H1 (cell line): ENCODE measurements at regions of chr20 and their contacts with region 1.

Region 1: GRCh38 chr20:33933469-33933909 is 60.2 kb upstream of the RALY start:
- DNase-seq: peak; percentile 51 to 70
- H3K4me3 ChIP-seq: no peak overlapping the region
- H3K27ac ChIP-seq: no peak overlapping the region
- H3K4me1 ChIP-seq: no peaks in the 10 kb centered on the region
- H3K27me3 ChIP-seq: no peaks in the 10 kb centered on the region
- CTCF ChIP-seq: peak; percentile 80 to 92 (median 82)
- EP300 ChIP-seq: no peak
- POLR2A ChIP-seq: no peak
- RAD21 ChIP-seq: peak; percentile 90 to 94

Region 2: GRCh38 chr20:33915726-33916331 is 17.7 kb before region 1 on chr20:
- CTCF ChIA-PET with region 1: interaction called, 73 read pairs
- POLR2A ChIA-PET with region 1: interaction called, 3 read pairs
- DNase-seq: peak in 1 of 2 experiments; percentile 85
- H3K4me3 ChIP-seq: no peak overlapping the region
- H3K27ac ChIP-seq: no peak overlapping the region
- H3K4me1 ChIP-seq: no peaks in the 10 kb centered on the region
- H3K27me3 ChIP-seq: no peaks in the 10 kb centered on the region
- CTCF ChIP-seq: peak; percentile 76 to 92 (median 85)
- EP300 ChIP-seq: no peak
- POLR2A ChIP-seq: no peak
- RAD21 ChIP-seq: peak; percentile 50 to 66

Region 3: DNA sequence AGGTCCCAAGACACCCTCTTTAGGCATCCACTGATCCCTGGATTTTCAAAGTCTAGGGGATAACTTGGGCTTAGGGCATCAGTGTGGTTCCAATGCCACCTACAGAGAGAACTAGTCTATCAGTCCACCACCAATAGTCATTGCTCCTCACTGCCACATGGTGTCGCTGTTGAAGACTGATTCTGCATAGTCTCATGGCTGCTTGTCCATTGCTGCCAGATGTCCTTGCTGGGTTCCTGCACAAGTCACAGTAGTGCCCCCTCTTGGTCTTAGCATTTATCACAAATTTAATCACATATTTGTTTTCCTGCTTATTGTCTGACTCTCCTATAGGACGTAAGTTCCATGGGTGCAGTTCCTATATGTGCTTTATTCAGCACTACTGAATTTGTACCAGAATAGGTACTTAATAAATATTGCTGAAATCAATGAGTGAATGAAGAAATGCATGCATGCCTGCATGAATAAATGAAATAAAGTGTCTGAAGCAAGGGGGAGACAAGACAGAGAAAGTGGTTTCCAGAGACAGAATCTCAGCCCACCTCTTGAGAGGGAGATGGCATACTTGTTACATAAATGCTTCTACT is 14.3 kb after region 1 on chr20:
- CTCF ChIA-PET with region 1: interaction called, 14 read pairs
- POLR2A ChIA-PET with region 1: interaction called, 3 read pairs
- DNase-seq: peak; percentile 59 to 82
- H3K4me3 ChIP-seq: no peak overlapping the region
- H3K27ac ChIP-seq: no peak overlapping the region
- H3K4me1 ChIP-seq: no peaks in the 10 kb centered on the region
- H3K27me3 ChIP-seq: no peaks in the 10 kb centered on the region
- CTCF ChIP-seq: peak; percentile 87 to 100 (median 99)
- EP300 ChIP-seq: no peak; a peak in 1 of 3 replicates
- POLR2A ChIP-seq: no peak
- RAD21 ChIP-seq: peak; percentile 91 to 94

Region 4: GRCh38 chr20:34083137-34083536 is 149.6 kb after region 1 on chr20:
- CTCF ChIA-PET with region 1: interaction called, 12 read pairs
- POLR2A ChIA-PET with region 1: no interaction called
- DNase-seq: no peak
- H3K4me3 ChIP-seq: no peak overlapping the region
- H3K27ac ChIP-seq: no peak overlapping the region
- H3K4me1 ChIP-seq: no peaks in the 10 kb centered on the region
- H3K27me3 ChIP-seq: no peaks in the 10 kb centered on the region
- CTCF ChIP-seq: no peak
- EP300 ChIP-seq: no peak
- POLR2A ChIP-seq: no peak
- RAD21 ChIP-seq: no peak; a peak in 1 of 4 replicates

Region 5: DNA sequence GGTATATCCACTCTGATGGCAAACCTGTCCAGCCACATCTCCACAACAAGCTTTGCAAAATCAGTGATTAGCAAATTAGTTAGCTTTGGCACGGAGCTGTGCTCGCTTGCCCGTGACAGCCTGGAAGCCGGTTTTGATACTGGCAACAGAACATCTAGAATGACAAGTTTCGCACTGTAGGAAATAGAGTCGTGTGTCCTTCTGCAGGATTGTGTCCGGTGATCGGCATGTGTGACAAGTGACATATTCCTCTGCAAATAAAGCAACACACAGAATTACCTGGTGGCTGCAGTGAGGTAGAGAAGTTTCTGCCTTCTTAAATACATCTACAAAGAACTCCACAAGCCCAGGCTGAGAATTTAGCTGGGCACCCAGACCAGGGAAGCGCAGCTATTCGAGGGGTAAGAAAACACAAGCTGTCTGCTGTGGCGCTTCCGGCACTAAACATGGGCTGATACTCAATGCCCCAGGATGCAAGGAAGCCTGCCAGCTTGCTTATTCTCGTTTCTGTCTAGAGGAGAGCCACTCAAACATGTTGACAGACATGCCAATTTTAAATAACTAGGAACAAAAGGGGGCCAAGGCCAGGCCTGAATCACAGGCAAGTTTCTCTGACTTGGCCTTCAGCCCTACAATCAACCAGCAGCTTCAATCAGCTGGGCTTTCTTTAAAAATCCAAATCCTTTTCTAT is 156.3 kb after region 1 on chr20:
- CTCF ChIA-PET with region 1: interaction called, 12 read pairs
- POLR2A ChIA-PET with region 1: no interaction called
- DNase-seq: no peak
- H3K4me3 ChIP-seq: no peak overlapping the region
- H3K27ac ChIP-seq: no peak overlapping the region
- H3K4me1 ChIP-seq: no peaks in the 10 kb centered on the region
- H3K27me3 ChIP-seq: no peaks in the 10 kb centered on the region
- CTCF ChIP-seq: no peak
- EP300 ChIP-seq: no peak
- POLR2A ChIP-seq: no peak
- RAD21 ChIP-seq: no peak